Heart left ventricle (tissue), 16 donors: ENCODE measurements at regions of chr1 and their contacts with region 1.

Region 1: DNA sequence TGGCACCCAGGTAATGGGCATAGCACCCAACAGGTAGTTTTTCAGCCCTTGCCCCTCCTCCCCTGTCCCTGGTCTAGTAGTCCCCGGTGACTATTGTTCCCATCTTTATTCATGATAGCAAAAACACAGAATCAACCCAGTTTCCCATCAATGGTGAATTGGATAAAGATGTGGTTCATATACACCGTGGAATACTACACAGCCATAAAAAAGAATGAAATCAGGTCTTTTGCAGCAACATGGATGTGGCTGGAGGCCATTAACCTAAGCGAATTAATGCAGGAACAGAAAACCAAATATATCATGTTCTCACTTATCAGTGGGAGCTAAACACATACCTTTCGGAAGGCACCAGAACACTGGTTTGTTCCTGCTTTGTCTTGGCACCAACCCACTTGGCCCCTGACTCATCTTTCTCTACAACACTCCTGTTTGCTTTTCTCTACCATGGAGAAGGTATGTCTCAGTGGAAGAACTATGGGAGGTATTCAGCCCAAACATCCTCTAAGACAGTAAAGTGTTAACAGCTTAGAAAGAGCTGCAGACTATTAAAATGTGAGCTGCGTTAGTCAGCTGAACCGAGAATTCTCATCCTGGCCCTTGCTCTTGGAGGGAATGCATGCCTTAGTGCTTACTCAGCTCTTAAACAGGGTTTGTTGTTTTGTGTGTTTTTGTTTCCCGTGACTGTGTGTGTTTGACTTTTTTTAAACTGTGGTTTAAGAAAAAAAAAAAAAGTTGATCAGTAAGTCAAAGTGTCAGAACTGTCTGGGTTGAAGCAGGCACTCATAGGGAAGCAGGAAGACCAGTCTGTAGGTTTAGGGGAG is 203.0 kb downstream of the TOMM20 start:
- DNase-seq: no peak
- ATAC-seq: peak; percentile 40 to 73 (median 62)
- H3K4me3 ChIP-seq: no peak overlapping the region
- H3K27ac ChIP-seq: peak overlapping the region; percentile 19 to 87 (median 57)
- H3K4me1 ChIP-seq: peaks cover 6 to 58% (median 38%) of the 10 kb centered on the region in 12 donors
- H3K27me3 ChIP-seq: no peaks in the 10 kb centered on the region
- CTCF ChIP-seq: no peak
- POLR2A ChIP-seq: no peak

Region 2: DNA sequence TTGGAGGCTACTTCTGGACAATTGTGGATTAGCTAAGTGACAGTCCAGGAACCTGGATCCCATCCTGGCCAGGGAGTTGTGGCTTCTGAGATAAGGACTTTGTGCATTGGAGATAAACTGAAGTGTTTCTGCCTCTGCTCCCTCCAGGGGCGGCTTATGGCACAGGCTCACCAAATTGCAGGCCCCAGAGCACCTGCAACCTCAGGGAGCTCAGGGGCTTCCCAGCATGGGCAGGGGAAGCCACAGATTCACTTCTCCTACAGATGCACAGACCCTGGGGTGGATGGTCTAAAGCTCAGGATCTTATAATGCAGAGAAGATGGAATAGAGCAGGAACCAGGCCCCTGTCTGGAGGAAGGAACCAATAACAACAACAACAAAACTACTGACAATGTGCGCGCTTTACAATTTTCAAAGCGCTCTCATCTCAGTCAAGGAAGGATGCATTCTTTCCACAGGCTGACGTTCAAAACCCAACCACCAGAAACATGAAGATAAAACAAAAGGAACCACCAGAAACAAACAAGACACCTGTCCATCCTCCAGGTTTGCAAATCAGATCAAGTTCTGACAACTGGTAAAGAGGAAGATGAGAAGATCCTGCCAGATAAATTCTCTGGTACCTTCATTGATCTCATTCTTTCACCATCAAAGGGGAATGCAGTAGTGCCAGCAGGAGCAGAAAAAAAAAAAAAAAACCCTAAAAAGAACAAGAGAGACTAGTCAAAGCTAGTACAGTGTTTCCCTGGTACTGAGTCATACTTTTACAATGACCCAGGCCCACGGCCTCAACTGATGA is 194.7 kb before region 1 on chr1:
- intact Hi-C with region 1: no loop called
- DNase-seq: no peak
- ATAC-seq: no peak
- H3K4me3 ChIP-seq: no peak overlapping the region
- H3K27ac ChIP-seq: peak overlapping the region in 1 of 12 donors; percentile 66
- H3K4me1 ChIP-seq: peaks cover 17 to 49% (median 27%) of the 10 kb centered on the region in 12 donors
- H3K27me3 ChIP-seq: no peaks in the 10 kb centered on the region
- CTCF ChIP-seq: no peak
- POLR2A ChIP-seq: no peak

Region 3: GRCh38 chr1:234899041-234899729 is 26.5 kb before region 1 on chr1:
- intact Hi-C with region 1: loop called in 1 of 10 experiments (anchors 1 kb)
- DNase-seq: peak in 4 of 5 donors; percentile 57 to 76 (median 63)
- ATAC-seq: peak; percentile 57 to 79 (median 78)
- H3K4me3 ChIP-seq: peak overlapping the region in 1 of 12 donors; percentile 20
- H3K27ac ChIP-seq: peak overlapping the region; percentile 67 to 92 (median 83)
- H3K4me1 ChIP-seq: peaks cover 3 to 45% (median 32%) of the 10 kb centered on the region in 12 donors
- H3K27me3 ChIP-seq: no peaks in the 10 kb centered on the region
- CTCF ChIP-seq: no peak
- POLR2A ChIP-seq: no peak

Region 4: GRCh38 chr1:234963180-234963903 is 37.7 kb after region 1 on chr1:
- intact Hi-C with region 1: loop called in 4 of 10 experiments (anchors 5 kb)
- DNase-seq: peak; percentile 81 to 91 (median 86)
- ATAC-seq: peak; percentile 48 to 78 (median 68)
- H3K4me3 ChIP-seq: peak overlapping the region in 3 of 12 donors; percentile 5 to 32 (median 23)
- H3K27ac ChIP-seq: peak overlapping the region; percentile 24 to 99 (median 72)
- H3K4me1 ChIP-seq: peaks cover 9 to 74% (median 45%) of the 10 kb centered on the region in 12 donors
- H3K27me3 ChIP-seq: no peaks in the 10 kb centered on the region
- CTCF ChIP-seq: no peak
- POLR2A ChIP-seq: no peak

Region 5: GRCh38 chr1:234970731-234971476 is 45.3 kb after region 1 on chr1:
- intact Hi-C with region 1: loop called in 3 of 10 experiments (anchors 5 kb)
- DNase-seq: peak in 4 of 5 donors; percentile 74 to 84 (median 76)
- ATAC-seq: peak; percentile 75 to 80 (median 78)
- H3K4me3 ChIP-seq: peak overlapping the region in 4 of 12 donors; percentile 40 to 46 (median 44)
- H3K27ac ChIP-seq: peak overlapping the region; percentile 67 to 94 (median 83)
- H3K4me1 ChIP-seq: peaks cover 0 to 64% (median 32%) of the 10 kb centered on the region in 12 donors
- H3K27me3 ChIP-seq: no peaks in the 10 kb centered on the region
- CTCF ChIP-seq: no peak
- POLR2A ChIP-seq: peak in 1 of 2 donors; percentile 18

Region 6: GRCh38 chr1:234978397-234979295 is 53.0 kb after region 1 on chr1:
- intact Hi-C with region 1: loop called in 3 of 10 experiments (anchors 2 to 5 kb)
- DNase-seq: peak in 4 of 5 donors; percentile 48 to 71 (median 60)
- ATAC-seq: peak; percentile 7 to 51 (median 22)
- H3K4me3 ChIP-seq: peak overlapping the region in 2 of 12 donors; percentile 15 to 55
- H3K27ac ChIP-seq: peak overlapping the region; percentile 71 to 98 (median 88)
- H3K4me1 ChIP-seq: peaks cover 15 to 91% (median 45%) of the 10 kb centered on the region in 12 donors
- H3K27me3 ChIP-seq: no peaks in the 10 kb centered on the region
- CTCF ChIP-seq: peak in 5 of 12 donors; percentile 6 to 39 (median 19)
- POLR2A ChIP-seq: no peak

Region 7: DNA sequence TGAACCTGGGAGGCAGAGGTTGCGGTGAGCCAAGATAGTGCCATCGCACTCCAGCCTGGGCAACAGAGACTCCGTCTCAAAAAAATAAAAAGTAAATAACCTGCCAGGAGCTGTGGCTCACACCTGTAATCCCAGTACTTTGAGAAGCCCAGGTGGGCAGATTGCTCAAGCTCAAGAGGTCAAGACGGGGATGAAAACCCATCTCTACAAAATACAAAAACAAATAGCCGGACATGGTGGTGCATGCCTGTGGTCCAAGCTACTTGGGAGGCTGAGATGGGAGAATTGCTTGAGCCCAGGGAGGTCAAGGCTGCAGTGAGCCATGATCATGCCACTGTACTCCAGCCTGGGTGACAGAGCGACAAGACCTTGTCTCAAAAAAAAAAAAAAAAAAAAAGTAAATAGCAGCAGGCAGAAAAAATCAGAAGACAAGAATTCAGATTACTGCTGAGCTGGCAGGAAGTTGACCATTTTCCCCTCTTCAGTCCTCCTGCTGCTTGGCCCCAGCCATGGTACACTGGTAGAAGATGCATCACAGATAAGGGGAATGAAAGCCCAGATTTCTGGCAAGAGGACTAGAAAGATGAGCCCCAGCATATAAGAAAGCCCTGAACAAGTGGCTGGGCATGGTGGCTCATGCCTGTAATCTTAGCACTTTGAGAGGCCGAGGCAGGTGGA is 105.4 kb after region 1 on chr1:
- intact Hi-C with region 1: no loop called
- DNase-seq: no peak
- ATAC-seq: no peak
- H3K4me3 ChIP-seq: no peak overlapping the region
- H3K27ac ChIP-seq: no peak overlapping the region
- H3K4me1 ChIP-seq: no peaks in the 10 kb centered on the region
- H3K27me3 ChIP-seq: no peaks in the 10 kb centered on the region
- CTCF ChIP-seq: no peak
- POLR2A ChIP-seq: no peak